ENCODE measurements at regions of chr9 and their contacts with region 1.

Region 1: GRCh38 chr9:106771631-106772030 is 91.3 kb upstream of the ZNF462 start:
- DNase-seq: peak in 4 of 5 donors; percentile 37 to 76 (median 56)
- ATAC-seq: peak; percentile 77 to 90 (median 80)
- H3K4me3 ChIP-seq: no peak overlapping the region
- H3K27ac ChIP-seq: no peak overlapping the region
- H3K4me1 ChIP-seq: peaks cover 0 to 8% (median 0%) of the 10 kb centered on the region in 12 donors
- H3K27me3 ChIP-seq: no peaks in the 10 kb centered on the region
- CTCF ChIP-seq: no peak
- POLR2A ChIP-seq: no peak

Region 2: DNA sequence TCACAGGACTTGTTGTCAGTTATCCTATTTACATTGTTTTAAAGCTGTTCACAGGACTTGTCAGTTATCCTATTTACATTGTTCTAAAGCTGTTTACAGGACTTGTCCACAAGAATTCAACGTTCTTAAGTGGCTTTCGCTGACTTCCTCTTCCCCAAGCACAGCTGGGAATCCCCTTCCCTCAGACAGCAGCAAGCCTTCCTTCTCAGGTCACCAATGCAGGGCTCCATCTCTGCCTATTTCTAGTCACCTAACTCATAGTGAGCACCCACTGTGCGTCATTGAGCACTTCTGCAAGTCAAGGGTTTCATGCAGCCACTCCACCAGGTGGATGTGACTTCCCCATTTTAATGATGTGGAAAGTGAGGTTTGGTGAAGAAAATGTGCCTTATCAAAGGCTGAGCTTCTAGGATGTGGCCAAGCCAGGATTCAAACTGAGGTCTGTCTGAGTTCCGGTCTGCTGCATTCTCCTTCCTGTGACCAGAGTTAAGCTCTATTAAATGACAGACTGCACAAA is 18.4 kb before region 1 on chr9:
- intact Hi-C with region 1: no loop called
- DNase-seq: no peak
- ATAC-seq: no peak
- H3K4me3 ChIP-seq: no peak overlapping the region
- H3K27ac ChIP-seq: no peak overlapping the region
- H3K4me1 ChIP-seq: peaks cover 0 to 11% (median 0%) of the 10 kb centered on the region in 12 donors
- H3K27me3 ChIP-seq: no peaks in the 10 kb centered on the region
- CTCF ChIP-seq: no peak
- POLR2A ChIP-seq: no peak

Region 3: DNA sequence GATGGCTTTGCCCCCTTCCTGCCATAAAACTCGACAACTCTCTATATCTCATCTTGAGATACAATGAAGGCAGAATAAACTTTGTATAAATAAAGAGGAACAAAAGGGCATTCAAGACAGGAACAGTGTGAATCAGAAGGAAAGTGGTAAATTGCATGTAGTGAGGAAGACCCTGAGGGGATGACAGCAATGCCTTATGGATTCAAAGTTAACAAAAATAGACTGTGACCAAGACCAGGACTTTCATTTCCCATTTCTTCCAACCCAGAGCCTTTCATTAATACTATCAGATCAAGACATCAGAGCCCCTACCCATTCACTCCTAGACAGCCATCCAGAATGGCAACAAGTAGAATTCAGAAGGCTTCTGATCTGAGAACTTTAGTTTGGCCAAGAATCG is 44.9 kb after region 1 on chr9:
- intact Hi-C with region 1: no loop called
- DNase-seq: no peak
- ATAC-seq: no peak
- H3K4me3 ChIP-seq: no peak overlapping the region
- H3K27ac ChIP-seq: no peak overlapping the region
- H3K4me1 ChIP-seq: no peaks in the 10 kb centered on the region
- H3K27me3 ChIP-seq: no peaks in the 10 kb centered on the region
- CTCF ChIP-seq: no peak
- POLR2A ChIP-seq: no peak

Region 4: DNA sequence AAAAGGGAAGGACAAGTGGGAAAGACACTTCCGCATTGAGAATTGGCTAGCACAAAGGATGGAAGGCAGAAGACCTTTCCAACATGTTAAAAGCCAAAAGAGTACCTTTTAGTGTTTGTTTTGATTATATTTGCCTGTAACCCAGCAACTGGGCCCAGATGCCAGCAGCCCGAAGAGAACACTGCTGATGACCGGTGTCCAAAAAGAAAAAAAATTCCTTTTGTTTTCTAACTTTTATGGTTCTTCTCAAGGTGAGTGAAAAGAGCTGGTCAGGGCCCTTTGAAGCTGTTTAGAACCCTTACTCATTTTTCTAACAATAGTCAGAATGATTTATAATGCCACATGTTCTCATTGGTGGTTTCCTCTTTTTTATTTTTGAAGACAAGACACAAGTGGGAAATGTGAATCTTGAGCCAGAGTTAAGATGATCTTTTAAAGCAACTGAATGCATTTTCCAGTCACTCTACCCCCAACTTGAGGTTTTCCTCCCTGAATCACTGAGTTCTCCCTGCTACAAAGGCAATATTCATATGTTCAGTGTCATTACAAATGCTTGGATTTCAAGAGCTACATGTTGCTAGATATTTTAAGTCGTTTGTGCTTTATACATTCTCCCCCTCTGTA is 59.0 kb after region 1 on chr9:
- intact Hi-C with region 1: loop called in 1 of 10 experiments (anchors 10 kb)
- DNase-seq: peak in 2 of 5 donors; percentile 16 to 28
- ATAC-seq: peak; percentile 55 to 88 (median 77)
- H3K4me3 ChIP-seq: no peak overlapping the region
- H3K27ac ChIP-seq: peak overlapping the region in 9 of 12 donors; percentile 1 to 75 (median 29)
- H3K4me1 ChIP-seq: peaks cover 0 to 17% (median 12%) of the 10 kb centered on the region in 12 donors
- H3K27me3 ChIP-seq: no peaks in the 10 kb centered on the region
- CTCF ChIP-seq: no peak
- POLR2A ChIP-seq: no peak

Measured in heart left ventricle (tissue), 16 donors.